ENCODE measurements at regions of chr4 and their contacts with region 1.

Region 1: DNA sequence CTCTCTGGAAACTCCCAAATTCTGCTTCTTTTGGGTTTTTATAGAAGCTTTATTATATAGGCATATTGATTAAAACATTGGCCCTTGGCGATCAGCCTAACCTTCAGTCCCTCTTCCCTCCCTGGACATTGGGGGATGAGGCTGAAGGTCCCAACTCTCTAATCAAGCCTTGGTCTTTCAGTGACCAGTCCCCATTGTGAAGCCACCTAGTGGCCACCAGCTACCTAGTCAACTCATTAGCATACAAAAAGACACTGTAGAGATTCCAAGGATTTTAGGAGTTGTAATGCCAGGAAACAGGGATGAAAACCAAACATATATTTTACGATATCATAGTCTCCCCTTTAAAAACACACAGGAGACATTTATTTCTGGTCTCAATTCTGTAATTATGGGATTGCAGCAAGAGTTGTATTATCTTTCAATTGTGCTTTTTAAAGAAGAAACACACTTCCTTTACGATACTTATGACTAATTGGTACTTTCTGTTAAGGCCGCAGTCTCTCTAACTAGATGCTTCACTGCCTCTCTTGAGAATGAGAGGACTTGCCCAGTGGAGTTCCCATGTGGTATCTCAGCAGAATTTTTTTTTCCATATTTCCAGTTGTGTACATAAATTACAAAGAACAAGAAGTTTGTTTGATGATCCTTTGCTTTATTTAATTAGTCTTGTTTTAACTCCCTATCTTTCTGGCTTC is 58.2 kb downstream of the WDR17 start:
- DNase-seq: no peak
- H3K4me3 ChIP-seq: no peak overlapping the region
- H3K27ac ChIP-seq: no peak overlapping the region
- H3K4me1 ChIP-seq: no peaks in the 10 kb centered on the region
- H3K27me3 ChIP-seq: no peaks in the 10 kb centered on the region
- CTCF ChIP-seq: peak; percentile 25 to 58 (median 43)
- EP300 ChIP-seq: no peak
- POLR2A ChIP-seq: no peak

Region 2: GRCh38 chr4:175745329-175745728 is 378.5 kb before region 1 on chr4:
- intact Hi-C with region 1: no loop called
- DNase-seq: no peak
- H3K4me3 ChIP-seq: no peak overlapping the region
- H3K27ac ChIP-seq: no peak overlapping the region
- H3K4me1 ChIP-seq: no peaks in the 10 kb centered on the region
- H3K27me3 ChIP-seq: no peaks in the 10 kb centered on the region
- CTCF ChIP-seq: no peak
- EP300 ChIP-seq: no peak
- POLR2A ChIP-seq: no peak

Region 3: GRCh38 chr4:176034499-176034898 is 89.4 kb before region 1 on chr4:
- intact Hi-C with region 1: loop called (anchors 10 kb)
- DNase-seq: no peak
- H3K4me3 ChIP-seq: no peak overlapping the region
- H3K27ac ChIP-seq: no peak overlapping the region
- H3K4me1 ChIP-seq: peaks cover 0 to 15% (median 10%) of the 10 kb centered on the region in 4 donors
- H3K27me3 ChIP-seq: no peaks in the 10 kb centered on the region
- CTCF ChIP-seq: peak; percentile 48 to 59 (median 56)
- EP300 ChIP-seq: no peak
- POLR2A ChIP-seq: no peak